OCI-LY7 (cell line): ENCODE measurements at regions of chr12 and their contacts with region 1.

Region 1: GRCh38 chr12:54191550-54192022 is 2.8 kb upstream of the SMUG1 start:
- DNase-seq: peak; percentile 89
- H3K4me3 ChIP-seq: no peak overlapping the region
- H3K27ac ChIP-seq: no peak overlapping the region
- H3K4me1 ChIP-seq: peaks cover 54% of the 10 kb centered on the region
- CTCF ChIP-seq: peak; percentile 82

Region 2: GRCh38 chr12:54082397-54082892 is 109.1 kb before region 1 on chr12:
- CTCF ChIA-PET with region 1: no interaction called
- POLR2A ChIA-PET with region 1: interaction called, 10 read pairs
- intact Hi-C with region 1: no loop called
- DNase-seq: peak; percentile 39
- H3K4me3 ChIP-seq: peak overlapping the region; percentile 57
- H3K27ac ChIP-seq: peak overlapping the region; percentile 37
- H3K4me1 ChIP-seq: peaks cover 8% of the 10 kb centered on the region
- CTCF ChIP-seq: no peak

Region 3: DNA sequence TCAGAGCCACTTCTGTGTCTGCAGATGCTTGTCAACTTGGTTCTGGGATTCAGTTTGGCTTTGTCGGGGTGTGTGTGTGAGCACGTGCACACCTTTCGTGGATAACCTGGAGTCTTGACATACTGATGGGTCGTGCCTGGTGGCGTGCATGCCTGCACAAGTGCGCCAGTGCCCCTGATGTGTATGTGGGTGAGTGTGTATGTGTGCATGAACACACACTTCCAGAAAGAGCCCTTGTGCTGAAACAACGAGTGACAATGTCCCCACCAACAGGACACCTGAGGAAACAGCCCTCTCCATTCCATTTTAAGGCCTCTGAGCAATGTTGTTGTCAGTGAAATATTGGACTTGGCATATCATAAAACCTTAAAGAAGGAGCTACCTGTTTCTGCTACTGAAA is 56.7 kb before region 1 on chr12:
- CTCF ChIA-PET with region 1: interaction called, 3 read pairs
- POLR2A ChIA-PET with region 1: interaction called, 3 read pairs
- intact Hi-C with region 1: loop called (anchors 5 kb)
- DNase-seq: peak; percentile 27
- H3K4me3 ChIP-seq: no peak overlapping the region
- H3K27ac ChIP-seq: no peak overlapping the region
- H3K4me1 ChIP-seq: no peaks in the 10 kb centered on the region
- CTCF ChIP-seq: peak; percentile 58

Region 4: GRCh38 chr12:54311051-54311450 is 119.5 kb after region 1 on chr12:
- CTCF ChIA-PET with region 1: no interaction called
- POLR2A ChIA-PET with region 1: no interaction called
- intact Hi-C with region 1: no loop called
- DNase-seq: no peak
- H3K4me3 ChIP-seq: no peak overlapping the region
- H3K27ac ChIP-seq: no peak overlapping the region
- H3K4me1 ChIP-seq: no peaks in the 10 kb centered on the region
- CTCF ChIP-seq: no peak